ENCODE measurements at regions of chr18 and their contacts with region 1.

Region 1: GRCh38 chr18:48007955-48008701 is 77.7 kb upstream of the SMAD2 start:
- DNase-seq: peak in 32 of 35 experiments; percentile 7 to 65 (median 30)
- ATAC-seq: peak; percentile 79 to 89 (median 82)
- H3K4me3 ChIP-seq: peak overlapping the region; percentile 34 to 58
- H3K4me3 Mint-ChIP-seq: peak overlapping the region; percentile 64 to 79 (median 76)
- H3K27ac ChIP-seq: no peak overlapping the region
- H3K27ac Mint-ChIP-seq: no peak overlapping the region
- H3K4me1 ChIP-seq: peaks cover 0 to 14% of the 10 kb centered on the region in 2 experiments
- H3K4me1 Mint-ChIP-seq: peaks cover 8 to 11% (median 8%) of the 10 kb centered on the region in 3 donors
- H3K27me3 ChIP-seq: peaks cover 0 to 43% of the 10 kb centered on the region in 2 experiments
- H3K27me3 Mint-ChIP-seq: peaks cover 21 to 38% of the 10 kb centered on the region in 2 donors

Region 2: DNA sequence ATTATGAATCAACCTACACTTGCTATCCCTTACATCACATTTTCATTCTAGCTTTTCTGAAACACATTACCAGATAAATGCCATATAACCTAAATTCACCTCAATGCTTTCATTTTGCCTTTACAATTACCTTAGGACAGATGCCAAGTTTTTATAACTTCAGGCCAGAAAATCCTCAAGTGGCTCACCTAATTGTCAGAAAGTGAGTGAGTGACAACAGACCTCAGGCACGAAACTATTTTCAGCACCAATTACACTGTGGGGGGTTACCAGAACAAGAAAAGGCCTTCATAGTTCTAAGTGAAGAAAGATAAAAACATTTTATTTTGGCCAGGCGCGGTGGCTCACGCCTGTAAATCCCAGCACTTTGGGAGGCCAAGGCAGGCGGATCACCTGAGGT is 1199.0 kb before region 1 on chr18:
- CTCF ChIA-PET with region 1: interaction called in 1 of 2 experiments, 13 read pairs
- POLR2A ChIA-PET with region 1: no interaction called
- DNase-seq: no peak
- ATAC-seq: no peak
- H3K4me3 ChIP-seq: no peak overlapping the region
- H3K4me3 Mint-ChIP-seq: no peak overlapping the region
- H3K27ac ChIP-seq: no peak overlapping the region
- H3K27ac Mint-ChIP-seq: no peak overlapping the region
- H3K4me1 ChIP-seq: no peaks in the 10 kb centered on the region
- H3K4me1 Mint-ChIP-seq: no peaks in the 10 kb centered on the region
- H3K27me3 ChIP-seq: no peaks in the 10 kb centered on the region
- H3K27me3 Mint-ChIP-seq: no peaks in the 10 kb centered on the region

Region 3: DNA sequence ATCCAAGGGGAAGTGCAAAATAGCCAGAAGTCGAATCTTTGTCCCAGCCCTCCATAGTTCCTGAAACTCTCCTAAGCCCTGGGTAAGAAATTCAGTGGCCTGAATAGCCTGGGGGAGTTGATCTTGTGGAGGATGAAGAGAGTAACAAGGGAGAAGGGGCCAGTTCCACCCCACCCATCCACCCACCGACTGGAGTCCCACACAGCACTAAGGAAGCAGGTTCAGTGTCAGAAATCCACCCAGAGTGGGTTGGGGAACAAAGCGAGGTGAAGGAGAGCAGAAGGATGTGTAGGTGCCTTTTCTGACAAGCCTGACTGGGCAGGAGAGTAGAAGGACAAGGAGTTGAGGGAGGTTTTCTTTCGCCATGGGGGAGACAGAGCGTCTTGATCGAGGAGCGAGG is 214.5 kb before region 1 on chr18:
- CTCF ChIA-PET with region 1: interaction called in 1 of 2 experiments, 11 read pairs
- POLR2A ChIA-PET with region 1: no interaction called
- DNase-seq: no peak
- ATAC-seq: no peak
- H3K4me3 ChIP-seq: no peak overlapping the region
- H3K4me3 Mint-ChIP-seq: no peak overlapping the region
- H3K27ac ChIP-seq: no peak overlapping the region
- H3K27ac Mint-ChIP-seq: no peak overlapping the region
- H3K4me1 ChIP-seq: no peaks in the 10 kb centered on the region
- H3K4me1 Mint-ChIP-seq: no peaks in the 10 kb centered on the region
- H3K27me3 ChIP-seq: peaks cover 0 to 21% of the 10 kb centered on the region in 2 experiments
- H3K27me3 Mint-ChIP-seq: peaks cover 4 to 20% of the 10 kb centered on the region in 2 donors

Region 4: GRCh38 chr18:48018851-48019250 is 10.7 kb after region 1 on chr18:
- CTCF ChIA-PET with region 1: no interaction called
- POLR2A ChIA-PET with region 1: no interaction called
- DNase-seq: no peak
- ATAC-seq: no peak
- H3K4me3 ChIP-seq: no peak overlapping the region
- H3K4me3 Mint-ChIP-seq: no peak overlapping the region
- H3K27ac ChIP-seq: no peak overlapping the region
- H3K27ac Mint-ChIP-seq: no peak overlapping the region
- H3K4me1 ChIP-seq: no peaks in the 10 kb centered on the region
- H3K4me1 Mint-ChIP-seq: no peaks in the 10 kb centered on the region
- H3K27me3 ChIP-seq: peaks cover 0 to 19% of the 10 kb centered on the region in 2 experiments
- H3K27me3 Mint-ChIP-seq: peaks cover 17 to 49% of the 10 kb centered on the region in 2 donors

Measured in T-cell (primary cell).